ENCODE measurements at regions of chr17 and their contacts with region 1.

Region 1: DNA sequence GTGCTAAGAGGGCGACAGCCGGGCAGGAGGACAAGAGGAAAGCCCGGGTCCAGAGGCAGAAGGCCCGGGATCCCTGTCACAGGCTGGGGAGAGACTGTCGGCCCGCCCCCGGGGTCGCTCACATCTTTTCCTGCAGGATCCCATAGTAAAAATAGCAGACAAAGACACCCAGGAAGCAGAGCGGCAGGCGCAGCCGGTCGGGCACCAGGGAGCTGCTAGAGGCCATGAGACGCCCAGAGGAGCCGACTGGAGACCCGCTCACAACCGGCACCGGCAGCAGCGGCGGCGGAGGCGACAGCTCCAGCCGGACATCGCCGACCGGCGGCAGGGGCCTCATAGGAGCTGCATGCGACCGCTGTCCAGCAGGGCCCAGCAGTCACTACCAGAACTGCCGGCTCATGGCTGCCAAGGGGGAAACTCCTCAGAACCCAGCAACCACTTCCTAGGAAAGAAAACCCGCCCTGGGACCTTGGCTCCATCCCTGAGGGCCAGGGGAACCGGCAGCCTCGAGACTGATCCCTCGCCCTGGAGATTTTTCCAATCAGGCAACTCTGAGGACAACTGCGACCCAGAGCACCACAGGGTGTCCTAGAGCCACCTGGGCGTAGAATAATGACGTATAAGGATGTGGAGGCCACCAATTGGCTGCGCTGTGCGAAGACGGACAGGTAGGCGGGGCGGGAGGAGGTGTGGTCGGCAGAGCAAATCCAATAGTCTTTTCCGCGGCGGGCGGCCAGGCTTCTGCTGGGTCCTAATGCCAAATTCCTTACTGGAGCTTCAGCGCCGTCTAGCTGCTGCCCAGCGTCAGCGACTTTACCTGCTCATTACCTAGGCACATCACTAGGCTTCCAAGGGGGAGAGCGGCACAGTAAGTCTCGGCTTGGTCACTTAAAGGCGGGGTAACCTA is at the start of gene SLC35B1:
- DNase-seq: peak; percentile 100
- H3K4me3 ChIP-seq: peak within 1 kb of the TSS; percentile 84 to 93 (median 84)
- H3K27ac ChIP-seq: peak within 1 kb of the TSS; percentile 97
- H3K4me1 ChIP-seq: peaks cover 33% of the 10 kb centered on the region
- H3K27me3 ChIP-seq: no peaks in the 10 kb centered on the region
- CTCF ChIP-seq: peak; percentile 86 to 91
- POLR2A ChIP-seq: peak; percentile 66
- total RNA-seq, gene SLC35B1: 87.0 and 96.7 TPM in 2 replicates

Region 2: GRCh38 chr17:49567871-49568694 is 139.8 kb before region 1 on chr17:
- CTCF ChIA-PET with region 1: interaction called, 786 read pairs
- POLR2A ChIA-PET with region 1: interaction called, 3 read pairs
- dilution Hi-C with region 1: no loop called
- intact Hi-C with region 1: no loop called
- DNase-seq: peak; percentile 79
- H3K4me3 ChIP-seq: peak overlapping the region; percentile 10 to 34 (median 25)
- H3K27ac ChIP-seq: no peak overlapping the region
- H3K4me1 ChIP-seq: peaks cover 5% of the 10 kb centered on the region
- H3K27me3 ChIP-seq: peaks cover 6 to 16% of the 10 kb centered on the region in 2 experiments
- CTCF ChIP-seq: peak; percentile 90 to 93
- POLR2A ChIP-seq: no peak

Region 3: GRCh38 chr17:49694847-49695683 is 12.8 kb before region 1 on chr17:
- CTCF ChIA-PET with region 1: interaction called, 8 read pairs
- POLR2A ChIA-PET with region 1: interaction called, 11 read pairs
- dilution Hi-C with region 1: no loop called
- intact Hi-C with region 1: no loop called
- DNase-seq: peak; percentile 31
- H3K4me3 ChIP-seq: no peak overlapping the region
- H3K27ac ChIP-seq: no peak overlapping the region
- H3K4me1 ChIP-seq: peaks cover 16% of the 10 kb centered on the region
- H3K27me3 ChIP-seq: no peaks in the 10 kb centered on the region
- CTCF ChIP-seq: peak; percentile 77 to 92
- POLR2A ChIP-seq: no peak

Region 4: GRCh38 chr17:49763735-49764558 is 56.1 kb after region 1 on chr17 and contains the start of gene FAM117A:
- CTCF ChIA-PET with region 1: interaction called, 13 read pairs
- POLR2A ChIA-PET with region 1: interaction called, 21 read pairs
- dilution Hi-C with region 1: no loop called
- intact Hi-C with region 1: loop called (anchors 1 kb)
- DNase-seq: peak; percentile 99
- H3K4me3 ChIP-seq: peak within 1 kb of the TSS; percentile 63 to 86 (median 67)
- H3K27ac ChIP-seq: no peak within 1 kb of the TSS
- H3K4me1 ChIP-seq: peaks cover 14% of the 10 kb centered on the region
- H3K27me3 ChIP-seq: peaks cover 15 to 42% of the 10 kb centered on the region in 2 experiments
- CTCF ChIP-seq: no peak
- POLR2A ChIP-seq: peak; percentile 54
- total RNA-seq, gene FAM117A: 10.4 and 12.2 TPM in 2 replicates

Region 5: GRCh38 chr17:49788478-49789242 is 80.8 kb after region 1 on chr17 and contains the start of gene KAT7:
- CTCF ChIA-PET with region 1: interaction called, 21 read pairs
- POLR2A ChIA-PET with region 1: interaction called, 9 read pairs
- dilution Hi-C with region 1: no loop called
- intact Hi-C with region 1: loop called (anchors 1 kb)
- DNase-seq: peak; percentile 100
- H3K4me3 ChIP-seq: peak within 1 kb of the TSS; percentile 59 to 82 (median 77)
- H3K27ac ChIP-seq: peak within 1 kb of the TSS; percentile 94
- H3K4me1 ChIP-seq: peaks cover 16% of the 10 kb centered on the region
- H3K27me3 ChIP-seq: no peaks in the 10 kb centered on the region
- CTCF ChIP-seq: no peak
- POLR2A ChIP-seq: peak; percentile 94
- total RNA-seq, gene KAT7: 64.9 and 66.2 TPM in 2 replicates

Region 6: GRCh38 chr17:49851387-49852291 is 143.8 kb after region 1 on chr17:
- CTCF ChIA-PET with region 1: interaction called, 53 read pairs
- POLR2A ChIA-PET with region 1: no interaction called
- dilution Hi-C with region 1: no loop called
- intact Hi-C with region 1: loop called (anchors 1 kb)
- DNase-seq: peak; percentile 73
- H3K4me3 ChIP-seq: peak overlapping the region; percentile 18 to 41 (median 36)
- H3K27ac ChIP-seq: peak overlapping the region; percentile 1
- H3K4me1 ChIP-seq: peaks cover 6% of the 10 kb centered on the region
- H3K27me3 ChIP-seq: no peaks in the 10 kb centered on the region
- CTCF ChIP-seq: peak; percentile 71 to 92
- POLR2A ChIP-seq: no peak